Activated naive CD4-positive, alpha-beta T cell treated with anti-CD3 and anti-CD28 coated beads for 36 hours (primary cell): ENCODE measurements at regions of chrX and their contacts with region 1.

Region 1: DNA sequence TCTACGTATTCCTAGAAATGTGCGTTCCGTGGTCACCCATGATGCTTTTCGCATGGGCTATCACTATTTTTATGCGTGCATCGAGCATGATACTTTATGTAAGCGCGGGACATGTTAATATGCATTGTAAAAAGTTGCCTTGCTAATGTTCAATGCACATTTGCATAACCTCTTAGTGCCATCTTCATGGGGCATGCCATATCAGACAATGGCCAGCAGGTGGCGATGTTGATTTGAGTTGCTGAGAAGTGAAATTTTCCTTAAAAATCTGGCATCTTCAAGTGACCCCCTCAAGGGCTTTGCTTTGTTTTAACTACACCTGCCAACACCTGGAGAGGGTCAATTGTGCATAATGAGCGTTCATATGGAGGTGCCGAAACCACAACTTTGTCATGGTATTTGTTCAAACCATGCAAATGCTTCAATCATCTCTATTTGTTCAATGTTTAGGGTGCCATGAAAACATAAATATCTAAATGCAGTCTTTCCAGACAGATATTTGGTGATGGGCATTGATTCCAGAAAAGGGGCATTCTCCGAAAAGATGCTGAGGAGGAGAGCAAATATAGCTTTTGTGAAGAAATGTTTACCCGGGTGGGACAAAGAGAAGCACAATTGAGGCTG is 833.9 kb upstream of the PRKX start:
- DNase-seq: peak; percentile 41
- H3K4me3 Mint-ChIP-seq: no peak overlapping the region
- H3K27ac Mint-ChIP-seq: no peak overlapping the region
- H3K4me1 Mint-ChIP-seq: no peaks in the 10 kb centered on the region
- H3K27me3 Mint-ChIP-seq: no peaks in the 10 kb centered on the region

Region 2: GRCh38 chrX:3962511-3963311 is 584.6 kb before region 1 on chrX:
- CTCF ChIA-PET with region 1: interaction called, 3 read pairs
- intact Hi-C with region 1: loop called (anchors 5 kb)
- DNase-seq: peak; percentile 5
- H3K4me3 Mint-ChIP-seq: no peak overlapping the region
- H3K27ac Mint-ChIP-seq: no peak overlapping the region
- H3K4me1 Mint-ChIP-seq: peaks cover 5% of the 10 kb centered on the region
- H3K27me3 Mint-ChIP-seq: peaks cover 5% of the 10 kb centered on the region

Region 3: DNA sequence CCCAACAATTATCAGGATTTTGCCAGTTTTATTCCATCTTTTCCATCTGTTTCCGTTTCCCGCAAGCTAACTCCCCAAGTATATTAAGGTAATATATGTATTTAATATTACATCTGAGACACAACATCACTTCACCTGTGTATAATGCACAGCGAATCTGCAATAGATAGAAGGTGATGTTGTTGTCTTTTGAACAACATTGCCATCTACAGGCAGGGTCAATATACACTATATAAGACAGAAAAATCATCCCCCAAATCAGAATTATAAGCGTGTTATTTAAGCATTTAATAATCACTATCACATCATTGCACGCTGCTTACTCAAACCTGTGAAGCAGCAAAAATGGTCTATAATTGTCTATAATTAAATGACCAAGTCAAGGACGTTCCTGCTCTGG is 565.8 kb after region 1 on chrX:
- CTCF ChIA-PET with region 1: no interaction called
- intact Hi-C with region 1: loop called (anchors 2 kb)
- DNase-seq: no peak
- H3K4me3 Mint-ChIP-seq: no peak overlapping the region
- H3K27ac Mint-ChIP-seq: no peak overlapping the region
- H3K4me1 Mint-ChIP-seq: no peaks in the 10 kb centered on the region
- H3K27me3 Mint-ChIP-seq: no peaks in the 10 kb centered on the region